ENCODE measurements at regions of chr3 and their contacts with region 1.

Region 1: DNA sequence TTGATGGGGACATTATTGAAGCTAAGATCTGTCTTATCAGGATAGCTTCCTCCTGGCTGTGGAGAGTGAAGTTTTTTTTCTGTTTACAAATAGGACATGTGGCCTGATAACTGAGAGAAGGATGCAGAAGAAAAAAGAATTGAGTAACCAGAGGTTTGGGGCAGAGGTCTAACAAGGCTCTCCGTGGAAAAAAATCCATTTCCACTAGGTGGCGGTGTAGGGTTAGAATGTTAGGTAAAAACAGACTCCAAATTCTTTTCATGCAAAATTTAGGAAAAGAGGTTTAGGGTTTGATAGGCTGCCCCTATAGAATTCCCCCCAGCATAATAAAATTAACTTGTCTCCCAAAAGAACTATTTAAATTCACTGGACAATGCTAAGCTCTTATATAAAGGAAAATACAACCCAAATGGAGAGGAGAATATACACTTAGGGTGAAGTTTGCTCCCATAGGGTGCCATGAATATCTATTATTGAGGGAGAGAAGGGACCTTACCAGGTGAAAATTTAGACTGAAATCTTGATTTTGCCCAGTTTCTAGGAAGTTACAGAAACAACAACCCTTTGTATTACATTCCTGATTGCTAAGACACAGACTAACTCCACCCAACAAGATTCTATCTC is 1560.4 kb downstream of the OTOL1 start:
- DNase-seq: peak; percentile 40
- CTCF ChIP-seq: peak; percentile 65

Region 2: DNA sequence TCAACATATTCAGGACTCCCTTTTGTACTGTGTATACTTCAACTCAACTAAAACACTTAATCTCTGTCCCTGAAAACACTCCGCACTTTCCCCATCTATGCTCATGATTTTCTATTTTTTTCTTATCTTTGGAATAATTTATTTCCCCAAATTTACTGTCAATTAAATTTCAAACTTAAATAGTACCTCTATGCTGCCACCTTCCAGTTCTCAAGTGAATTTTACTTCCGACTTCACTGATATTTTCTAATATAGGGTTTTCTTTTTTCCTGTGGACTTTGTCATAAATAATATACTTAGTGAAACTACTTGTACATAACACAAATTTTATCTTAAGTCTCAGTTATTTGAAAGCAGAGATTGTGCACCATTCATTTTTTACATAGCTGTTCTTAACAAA is 257.1 kb before region 1 on chr3:
- CTCF ChIA-PET with region 1: no interaction called
- POLR2A ChIA-PET with region 1: no interaction called
- DNase-seq: no peak
- CTCF ChIP-seq: no peak

Region 3: GRCh38 chr3:163024680-163025079 is 32.3 kb before region 1 on chr3:
- CTCF ChIA-PET with region 1: no interaction called
- POLR2A ChIA-PET with region 1: no interaction called
- DNase-seq: no peak
- CTCF ChIP-seq: no peak

Region 4: DNA sequence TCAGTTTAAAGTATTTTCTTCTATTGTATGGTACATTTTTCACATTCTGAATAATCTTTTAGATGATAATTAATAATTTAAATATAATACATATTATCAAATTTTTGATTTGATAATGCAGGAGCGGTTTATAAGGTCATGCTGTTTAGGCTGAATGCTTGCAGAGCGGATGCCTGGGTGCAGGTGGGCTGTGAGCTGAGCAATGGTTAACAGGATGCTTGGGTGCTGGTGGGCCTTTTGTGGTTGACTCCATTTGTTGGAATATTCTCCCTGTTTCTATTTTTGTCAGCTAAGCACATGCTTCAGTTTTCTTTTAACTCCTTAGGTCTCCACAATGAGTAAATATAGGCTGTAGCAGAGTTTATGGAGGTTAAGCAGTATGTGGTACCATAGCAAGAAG is 11.0 kb before region 1 on chr3:
- CTCF ChIA-PET with region 1: interaction called, 11 read pairs
- POLR2A ChIA-PET with region 1: no interaction called
- DNase-seq: no peak
- CTCF ChIP-seq: no peak

Region 5: GRCh38 chr3:163490119-163490518 is 433.1 kb after region 1 on chr3:
- CTCF ChIA-PET with region 1: interaction called, 12 read pairs
- POLR2A ChIA-PET with region 1: no interaction called
- DNase-seq: peak; percentile 23
- CTCF ChIP-seq: peak; percentile 66